Dorsolateral prefrontal cortex (tissue), 120 donors: ENCODE measurements at regions of chr3 and their contacts with region 1.

Region 1: DNA sequence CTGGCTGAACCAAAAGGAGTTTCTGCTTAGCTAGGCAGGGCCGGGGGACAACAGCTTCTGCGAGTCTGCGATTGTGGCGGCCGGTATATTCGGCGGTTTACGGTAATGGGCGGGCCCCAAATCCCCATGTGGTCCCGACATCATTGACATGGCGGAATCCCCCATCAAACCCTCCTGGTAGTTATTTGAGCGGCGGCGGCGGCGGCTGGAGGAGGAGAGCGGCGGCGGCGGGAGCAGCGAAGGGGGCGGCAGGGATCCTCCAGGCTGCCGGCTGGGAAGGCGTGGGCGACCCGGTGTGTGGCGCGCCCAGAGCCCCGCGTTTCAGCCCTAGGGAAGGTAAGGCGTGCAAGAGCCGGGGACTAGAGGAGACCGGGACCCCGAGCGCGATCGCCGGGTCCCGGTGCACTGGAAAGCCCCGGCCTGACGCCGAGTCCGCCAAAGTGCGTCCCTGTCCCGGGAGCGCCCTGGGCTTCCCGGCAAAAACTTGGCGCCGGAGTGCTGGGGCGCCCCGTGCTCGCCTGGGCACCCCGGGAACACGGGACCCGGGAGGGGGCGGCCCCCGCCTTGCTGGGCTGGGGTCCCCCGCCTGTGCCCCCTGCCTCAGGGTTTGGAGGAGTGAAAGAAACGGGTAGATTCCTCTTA is at the start of gene FNDC3B:
- DNase-seq: peak; percentile 92 to 98 (median 96)
- H3K4me3 ChIP-seq: peak within 1 kb of the TSS; percentile 63 to 99 (median 93)
- H3K27ac ChIP-seq: peak within 1 kb of the TSS in 58 of 59 donors; percentile 62 to 98 (median 90)
- H3K27me3 ChIP-seq: no peaks in the 10 kb centered on the region
- CTCF ChIP-seq: peak in 14 of 56 donors; percentile 3 to 38 (median 20)
- total RNA-seq, gene FNDC3B: 19.4 to 85.0 (median 36.2) TPM

Region 2: DNA sequence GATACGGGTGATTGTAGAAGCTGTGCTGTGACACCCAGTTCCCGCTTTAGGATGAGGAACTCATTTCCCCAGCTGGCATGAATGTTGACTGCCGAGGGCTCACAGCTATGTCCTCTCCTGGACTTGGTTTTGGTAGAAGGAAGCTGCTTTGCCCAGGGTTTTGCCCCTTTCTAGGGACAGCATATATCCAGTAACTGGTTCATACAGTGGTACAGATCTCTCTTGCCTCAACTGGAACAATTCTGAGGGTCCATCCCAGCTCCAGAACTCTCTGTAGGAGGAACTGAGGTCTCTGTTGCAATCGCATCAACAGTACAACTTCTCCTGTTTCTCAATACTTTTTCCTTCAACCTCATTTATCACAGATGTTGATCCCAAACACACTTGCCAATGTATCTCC is 54.7 kb before region 1 on chr3:
- intact Hi-C with region 1: no loop called
- DNase-seq: no peak
- H3K4me3 ChIP-seq: no peak overlapping the region
- H3K27ac ChIP-seq: peak overlapping the region in 1 of 59 donors; percentile 43
- H3K27me3 ChIP-seq: no peaks in the 10 kb centered on the region
- CTCF ChIP-seq: no peak

Region 3: DNA sequence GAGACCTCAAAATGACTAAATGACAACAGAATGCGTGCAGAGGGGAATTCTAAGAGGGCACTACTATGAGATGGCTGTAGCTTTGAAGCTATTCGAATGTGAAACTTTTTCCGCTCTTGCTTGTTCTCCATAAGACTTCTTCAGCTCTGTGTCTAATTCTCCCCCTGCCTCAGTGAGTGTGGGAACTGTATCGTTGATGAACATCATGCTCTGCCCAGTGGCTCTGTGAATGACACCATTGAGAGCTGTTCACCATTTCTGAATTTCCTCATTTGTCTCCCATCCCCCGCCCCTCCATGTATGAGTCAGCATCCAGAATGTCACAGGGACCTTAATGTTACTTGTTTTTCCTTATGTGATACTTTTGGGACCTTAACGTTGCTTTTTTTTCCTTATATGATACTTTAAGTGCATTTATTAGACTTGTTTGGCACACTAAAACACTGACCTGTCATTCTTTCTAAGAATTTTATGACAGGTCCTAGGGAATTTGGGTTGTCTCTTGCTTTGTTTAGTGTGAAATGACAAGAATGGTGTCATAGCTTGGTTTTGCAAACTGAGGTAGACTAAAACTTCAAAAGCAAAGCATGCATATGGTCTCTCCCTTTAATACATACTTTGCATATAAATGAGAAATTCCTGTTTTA is 99.4 kb after region 1 on chr3:
- intact Hi-C with region 1: loop called in 1 of 2 experiments (anchors 5 kb)
- DNase-seq: peak in 6 of 10 donors; percentile 52 to 83 (median 70)
- H3K4me3 ChIP-seq: peak overlapping the region in 38 of 59 donors; percentile 4 to 53 (median 32)
- H3K27ac ChIP-seq: peak overlapping the region in 7 of 59 donors; percentile 5 to 39 (median 23)
- H3K27me3 ChIP-seq: no peaks in the 10 kb centered on the region
- CTCF ChIP-seq: peak in 6 of 56 donors; percentile 9 to 39 (median 20)

Region 4: DNA sequence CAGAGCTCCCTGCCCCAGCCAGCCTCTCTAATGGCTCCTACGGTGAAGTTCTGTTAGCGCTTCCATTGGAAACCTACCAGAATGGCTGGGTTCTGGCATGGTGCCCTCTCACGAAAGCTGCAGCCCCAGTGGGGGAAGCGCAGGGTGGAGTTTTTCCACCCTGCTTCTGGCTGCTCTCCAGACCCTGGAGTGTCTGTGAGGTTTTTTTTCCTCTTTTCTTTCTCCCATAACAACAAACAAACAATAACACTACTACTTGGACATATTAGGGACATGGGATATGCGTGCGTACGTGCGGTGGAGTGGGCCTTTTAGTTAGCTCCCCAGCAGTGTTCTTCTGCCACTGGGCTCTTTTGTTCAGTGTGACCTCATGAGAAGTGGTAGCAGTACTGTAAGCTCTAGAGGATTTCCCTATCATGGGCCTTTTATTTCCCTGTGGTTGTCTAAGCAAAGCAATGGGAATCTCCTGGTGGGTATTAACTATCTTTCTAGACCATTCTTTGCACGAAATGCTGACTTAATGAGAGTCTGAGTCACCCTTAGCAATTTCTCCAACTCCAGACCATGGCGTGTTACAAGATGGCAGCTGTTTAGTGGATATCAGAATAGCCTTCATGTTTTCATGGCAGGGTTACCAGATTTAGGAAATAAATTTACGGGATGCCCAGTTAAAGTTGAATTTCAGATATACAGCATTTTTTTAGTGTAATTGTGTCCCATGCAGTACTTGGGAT is 161.7 kb after region 1 on chr3:
- intact Hi-C with region 1: loop called in 1 of 2 experiments (anchors 2 kb)
- DNase-seq: peak in 1 of 10 donors; percentile 65
- H3K4me3 ChIP-seq: peak overlapping the region in 1 of 59 donors; percentile 2
- H3K27ac ChIP-seq: peak overlapping the region in 3 of 59 donors; percentile 4 to 29 (median 18)
- H3K27me3 ChIP-seq: peaks cover 0 to 9% (median 0%) of the 10 kb centered on the region in 45 donors
- CTCF ChIP-seq: no peak

Region 5: DNA sequence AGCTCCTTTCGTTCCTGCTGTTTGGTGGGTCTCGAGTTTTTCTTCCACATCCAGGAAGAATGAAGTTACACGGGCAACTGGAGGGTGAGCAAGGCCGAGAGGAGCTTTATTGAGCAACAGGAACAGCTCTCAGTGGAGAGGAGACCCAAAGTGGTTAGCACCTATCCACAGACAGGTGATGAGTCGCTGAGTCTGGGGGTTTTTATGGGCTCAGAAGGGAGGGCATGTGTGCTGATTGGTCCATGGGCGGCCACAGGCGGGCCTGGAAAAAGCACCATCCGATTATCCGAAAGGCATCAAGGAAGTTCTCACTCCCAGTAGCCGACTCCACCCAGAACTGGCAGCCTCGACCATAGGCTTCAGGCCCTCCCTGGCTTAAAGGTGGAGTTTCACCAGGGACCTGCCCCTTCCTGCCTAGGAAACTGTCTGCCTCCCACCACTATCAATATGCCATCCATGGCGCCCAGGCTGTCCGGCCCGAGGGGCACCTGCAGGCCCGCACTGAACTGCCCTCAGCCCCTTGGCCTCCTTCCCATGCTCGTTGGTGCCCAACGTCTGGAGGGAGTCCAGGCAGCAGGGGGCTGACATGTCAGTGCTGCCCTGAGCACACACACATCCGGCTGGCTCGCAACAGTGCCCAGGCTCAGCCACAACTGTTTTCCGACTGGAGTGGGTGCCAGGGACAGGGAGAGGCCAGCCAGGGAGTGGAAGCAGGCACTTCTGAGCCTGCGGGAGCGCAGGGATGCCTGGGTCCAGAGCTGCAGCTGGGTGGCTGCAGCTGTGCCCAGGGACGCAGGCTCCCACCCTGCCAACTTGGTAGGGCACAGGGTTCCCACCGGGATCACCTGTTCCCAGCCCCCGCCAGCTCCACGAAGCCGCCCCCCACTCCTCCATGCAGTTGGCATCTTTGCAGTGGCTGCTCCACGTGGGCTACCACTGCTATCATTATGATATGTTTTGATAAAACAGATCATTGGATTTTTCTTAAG is 170.1 kb after region 1 on chr3:
- intact Hi-C with region 1: loop called (anchors 2 to 10 kb)
- DNase-seq: peak in 1 of 10 donors; percentile 43
- H3K4me3 ChIP-seq: no peak overlapping the region
- H3K27ac ChIP-seq: no peak overlapping the region
- H3K27me3 ChIP-seq: peaks cover 0 to 37% (median 0%) of the 10 kb centered on the region in 45 donors
- CTCF ChIP-seq: no peak

Region 6: DNA sequence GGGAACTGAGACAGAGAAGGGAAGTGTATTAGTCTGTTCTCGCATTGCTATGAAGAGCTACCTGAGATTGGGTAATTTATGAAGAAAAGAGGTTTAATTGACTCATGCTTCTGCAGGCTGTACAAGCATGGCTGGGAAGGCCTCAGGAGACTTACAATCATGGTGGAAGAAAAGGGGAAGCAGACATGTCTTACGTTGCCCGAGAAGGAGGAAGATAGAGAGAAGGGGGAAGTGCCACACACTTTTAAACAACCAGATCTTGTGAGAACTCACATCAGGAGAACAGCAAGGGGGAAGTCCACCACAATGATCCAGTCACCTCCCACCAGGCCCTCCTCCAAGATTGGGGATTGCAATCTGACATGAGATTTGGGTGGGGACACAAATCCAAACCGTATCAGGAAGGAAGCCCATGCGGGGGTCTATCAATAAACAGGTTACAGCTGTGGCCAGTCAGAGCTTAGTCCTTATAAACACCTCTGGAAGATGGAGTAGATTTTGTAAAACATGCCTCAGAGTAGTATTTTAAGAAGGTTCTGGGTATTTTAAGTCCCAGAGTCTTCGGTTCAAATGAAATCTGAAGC is 254.8 kb after region 1 on chr3:
- intact Hi-C with region 1: no loop called
- DNase-seq: no peak
- H3K4me3 ChIP-seq: no peak overlapping the region
- H3K27ac ChIP-seq: no peak overlapping the region
- H3K27me3 ChIP-seq: no peaks in the 10 kb centered on the region
- CTCF ChIP-seq: no peak

Region 7: GRCh38 chr3:172332256-172333041 is 292.9 kb after region 1 on chr3:
- intact Hi-C with region 1: loop called in 1 of 2 experiments (anchors 10 kb)
- DNase-seq: peak in 8 of 10 donors; percentile 44 to 66 (median 64)
- H3K4me3 ChIP-seq: peak overlapping the region in 2 of 59 donors; percentile 20 to 24
- H3K27ac ChIP-seq: no peak overlapping the region
- H3K27me3 ChIP-seq: no peaks in the 10 kb centered on the region
- CTCF ChIP-seq: peak; percentile 70 to 96 (median 89)

Region 8: DNA sequence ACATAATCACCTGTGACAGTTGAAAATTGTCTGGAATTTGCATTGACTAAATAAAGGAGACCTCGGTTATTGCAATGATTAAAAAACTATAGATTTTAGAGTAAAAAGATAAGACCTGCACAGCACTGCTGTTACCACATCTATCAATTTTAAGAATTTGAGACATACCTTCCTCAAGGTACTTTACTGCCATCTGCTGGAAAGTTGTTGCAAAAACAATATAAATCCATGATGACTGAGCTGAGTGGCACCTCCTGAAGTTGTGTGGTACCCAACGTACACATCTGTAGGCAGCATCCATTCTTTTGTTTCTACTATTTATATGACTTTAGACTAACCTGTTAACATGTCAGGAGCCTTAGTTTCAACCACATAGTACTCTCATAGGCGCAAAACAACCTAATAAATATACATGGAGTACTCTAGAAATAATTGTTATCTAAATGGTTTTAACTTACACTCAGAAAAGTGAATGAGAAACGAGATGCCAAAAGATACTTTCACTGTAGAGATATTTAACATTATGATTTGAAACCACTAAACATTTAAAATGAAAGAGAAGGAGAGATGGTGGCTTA is 302.0 kb after region 1 on chr3:
- intact Hi-C with region 1: loop called (anchors 5 to 10 kb)
- DNase-seq: no peak
- H3K4me3 ChIP-seq: no peak overlapping the region
- H3K27ac ChIP-seq: no peak overlapping the region
- H3K27me3 ChIP-seq: no peaks in the 10 kb centered on the region
- CTCF ChIP-seq: peak; percentile 54 to 88 (median 75)